ENCODE measurements at regions of chr5 and their contacts with region 1.

Region 1: GRCh38 chr5:102583276-102584124 is 84.7 kb upstream of the SLCO6A1 start:
- DNase-seq: no peak
- H3K4me3 ChIP-seq: no peak overlapping the region
- H3K27ac ChIP-seq: no peak overlapping the region
- H3K4me1 ChIP-seq: no peaks in the 10 kb centered on the region
- H3K27me3 ChIP-seq: no peaks in the 10 kb centered on the region
- CTCF ChIP-seq: peak in 3 of 4 experiments; percentile 19 to 43 (median 29)
- POLR2A ChIP-seq: no peak

Region 2: DNA sequence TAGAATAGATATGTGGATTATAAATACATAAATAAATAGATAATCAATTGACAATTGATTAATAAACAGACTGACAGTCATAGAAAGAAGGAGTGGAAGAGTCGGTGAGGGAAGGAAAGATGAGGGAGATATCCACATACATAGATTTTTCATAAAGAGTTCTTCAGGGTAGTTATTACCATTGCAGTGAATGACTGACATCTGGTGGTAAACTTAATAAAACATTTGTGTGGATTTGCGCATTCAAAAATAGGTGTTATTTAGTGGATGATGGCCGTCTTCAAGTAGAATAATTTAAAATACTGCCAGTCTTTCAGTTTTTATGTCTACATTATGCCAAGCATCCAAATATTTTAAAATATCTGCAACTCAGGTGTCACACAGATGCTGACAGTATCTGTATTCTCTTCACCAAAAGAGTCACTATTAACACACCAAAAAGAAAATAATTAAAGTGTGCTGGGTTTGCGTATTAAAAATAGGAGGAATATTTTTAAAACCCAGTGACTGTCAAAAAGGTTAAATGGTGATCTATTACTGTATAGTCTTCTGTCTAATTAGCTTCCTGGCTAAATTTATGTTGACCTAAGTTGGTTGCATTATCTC is 457.7 kb after region 1 on chr5:
- intact Hi-C with region 1: loop called (anchors 10 kb)
- DNase-seq: no peak
- H3K4me3 ChIP-seq: no peak overlapping the region
- H3K27ac ChIP-seq: no peak overlapping the region
- H3K4me1 ChIP-seq: no peaks in the 10 kb centered on the region
- H3K27me3 ChIP-seq: no peaks in the 10 kb centered on the region
- CTCF ChIP-seq: peak; percentile 52 to 58 (median 56)
- POLR2A ChIP-seq: no peak

Measured in uterus (tissue), 4 donors.